ENCODE measurements at regions of chr3 and their contacts with region 1.

Region 1: GRCh38 chr3:171049861-171050444 is 23.4 kb upstream of the SLC2A2 start:
- DNase-seq: peak; percentile 67
- H3K4me3 ChIP-seq: no peak overlapping the region
- H3K27ac ChIP-seq: no peak overlapping the region
- H3K4me1 ChIP-seq: no peaks in the 10 kb centered on the region
- H3K27me3 ChIP-seq: no peaks in the 10 kb centered on the region
- CTCF ChIP-seq: peak; percentile 58 to 63
- POLR2A ChIP-seq: no peak

Region 2: DNA sequence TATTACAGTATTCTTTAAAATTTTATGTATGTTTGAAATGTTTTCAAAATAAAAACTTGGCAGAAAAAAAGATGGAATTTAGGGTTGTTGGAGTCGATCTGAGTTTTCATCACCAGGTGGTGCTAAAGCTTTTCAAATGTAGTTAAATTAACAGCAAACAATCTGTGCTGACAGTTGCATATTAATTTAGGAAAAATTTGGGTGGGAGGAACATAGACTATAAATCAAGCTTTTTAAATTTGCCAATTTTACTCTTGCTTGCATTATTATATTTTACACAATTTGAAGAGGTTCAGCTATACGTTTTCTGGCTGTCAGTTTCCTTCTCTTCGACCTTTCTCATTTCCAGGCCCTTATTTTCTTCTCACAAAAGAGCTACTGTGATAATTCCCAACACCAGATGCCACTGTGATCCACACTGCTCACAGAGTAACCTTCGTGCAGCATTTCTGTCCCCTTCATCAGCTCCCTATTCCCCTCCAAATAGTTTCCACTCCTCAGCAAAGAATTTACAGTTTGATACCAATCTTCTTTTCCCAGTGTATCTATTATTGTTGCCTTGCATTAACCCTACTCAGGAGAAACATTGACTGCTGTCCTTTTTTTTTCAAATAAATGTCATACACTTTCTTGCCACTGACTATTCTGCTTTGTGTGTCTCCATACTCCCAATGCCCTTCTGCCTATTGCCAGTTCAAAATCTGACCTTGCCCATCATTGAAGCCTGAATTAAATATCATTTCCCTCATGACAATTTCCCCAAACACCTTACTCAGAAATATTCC is 88.1 kb before region 1 on chr3:
- CTCF ChIA-PET with region 1: interaction called, 20 read pairs
- POLR2A ChIA-PET with region 1: no interaction called
- dilution Hi-C with region 1: no loop called
- intact Hi-C with region 1: loop called (anchors 1 kb)
- DNase-seq: peak; percentile 65
- H3K4me3 ChIP-seq: no peak overlapping the region
- H3K27ac ChIP-seq: no peak overlapping the region
- H3K4me1 ChIP-seq: no peaks in the 10 kb centered on the region
- H3K27me3 ChIP-seq: peaks cover 0 to 2% of the 10 kb centered on the region in 2 experiments
- CTCF ChIP-seq: peak; percentile 37 to 40
- POLR2A ChIP-seq: no peak

Region 3: GRCh38 chr3:171061749-171062148 is 11.8 kb after region 1 on chr3:
- CTCF ChIA-PET with region 1: interaction called, 10 read pairs
- POLR2A ChIA-PET with region 1: no interaction called
- dilution Hi-C with region 1: no loop called
- intact Hi-C with region 1: no loop called
- DNase-seq: no peak
- H3K4me3 ChIP-seq: no peak overlapping the region
- H3K27ac ChIP-seq: no peak overlapping the region
- H3K4me1 ChIP-seq: peaks cover 7% of the 10 kb centered on the region
- H3K27me3 ChIP-seq: no peaks in the 10 kb centered on the region
- CTCF ChIP-seq: no peak
- POLR2A ChIP-seq: no peak

Region 4: DNA sequence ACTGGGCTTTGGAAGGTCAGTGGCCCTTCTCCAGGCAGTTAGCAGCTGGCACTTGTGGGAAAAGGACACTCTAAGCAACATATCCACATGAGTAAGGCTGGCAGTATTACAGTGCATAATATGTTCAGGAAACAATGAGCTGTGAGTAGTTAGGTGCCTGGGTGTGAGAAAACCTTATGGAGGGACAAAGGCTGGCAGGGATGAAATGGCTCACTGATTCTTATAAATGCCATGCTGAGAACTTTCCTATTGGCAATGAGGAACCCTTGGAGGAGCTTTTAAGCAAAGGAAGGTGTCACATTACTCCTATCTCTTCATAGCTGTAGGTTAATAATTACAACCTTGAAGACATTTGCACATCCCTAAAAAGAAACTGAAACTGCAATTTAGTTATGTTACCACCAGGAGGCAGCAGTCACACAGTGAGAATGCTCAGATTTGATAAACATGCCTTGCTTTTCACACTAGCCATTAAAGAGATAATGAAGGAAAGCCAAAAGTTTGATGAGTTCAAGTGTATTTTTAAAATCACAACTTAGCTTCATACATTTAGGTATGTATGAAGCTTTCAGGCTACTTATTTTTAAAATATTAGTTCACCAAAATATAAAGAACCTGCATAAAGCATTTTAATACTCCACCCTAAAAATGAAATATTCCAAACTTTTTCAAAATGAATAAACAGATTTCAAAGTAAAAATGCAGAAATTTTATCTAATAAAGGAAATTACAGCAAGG is 113.2 kb after region 1 on chr3:
- CTCF ChIA-PET with region 1: no interaction called
- POLR2A ChIA-PET with region 1: no interaction called
- dilution Hi-C with region 1: no loop called
- intact Hi-C with region 1: loop called (anchors 5 kb)
- DNase-seq: no peak
- H3K4me3 ChIP-seq: no peak overlapping the region
- H3K27ac ChIP-seq: no peak overlapping the region
- H3K4me1 ChIP-seq: no peaks in the 10 kb centered on the region
- H3K27me3 ChIP-seq: no peaks in the 10 kb centered on the region
- CTCF ChIP-seq: peak; percentile 51 to 52
- POLR2A ChIP-seq: no peak

Region 5: GRCh38 chr3:171566803-171567422 is 517.0 kb after region 1 on chr3:
- CTCF ChIA-PET with region 1: interaction called, 56 read pairs
- POLR2A ChIA-PET with region 1: no interaction called
- dilution Hi-C with region 1: no loop called
- intact Hi-C with region 1: loop called (anchors 1 kb)
- DNase-seq: peak; percentile 55
- H3K4me3 ChIP-seq: no peak overlapping the region
- H3K27ac ChIP-seq: no peak overlapping the region
- H3K4me1 ChIP-seq: peaks cover 8% of the 10 kb centered on the region
- H3K27me3 ChIP-seq: peaks cover 0 to 2% of the 10 kb centered on the region in 2 experiments
- CTCF ChIP-seq: peak; percentile 40 to 46
- POLR2A ChIP-seq: no peak